Activated CD4-positive, alpha-beta T cell treated with anti-CD3 and anti-CD28 coated beads for 36 hours (primary cell): ENCODE measurements at regions of chr18 and their contacts with region 1.

Region 1: GRCh38 chr18:6382963-6383362 is 31.7 kb downstream of the L3MBTL4 start:
- DNase-seq: no peak
- ATAC-seq: no peak
- H3K4me3 Mint-ChIP-seq: no peak overlapping the region
- H3K27ac Mint-ChIP-seq: no peak overlapping the region
- H3K4me1 Mint-ChIP-seq: no peaks in the 10 kb centered on the region
- H3K27me3 Mint-ChIP-seq: peaks cover 4% of the 10 kb centered on the region

Region 2: GRCh38 chr18:6333981-6334380 is 49.0 kb before region 1 on chr18:
- CTCF ChIA-PET with region 1: no interaction called
- POLR2A ChIA-PET with region 1: no interaction called
- intact Hi-C with region 1: loop called in 1 of 2 experiments (anchors 5 kb)
- DNase-seq: no peak
- ATAC-seq: no peak
- H3K4me3 Mint-ChIP-seq: no peak overlapping the region
- H3K27ac Mint-ChIP-seq: no peak overlapping the region
- H3K4me1 Mint-ChIP-seq: no peaks in the 10 kb centered on the region
- H3K27me3 Mint-ChIP-seq: no peaks in the 10 kb centered on the region

Region 3: DNA sequence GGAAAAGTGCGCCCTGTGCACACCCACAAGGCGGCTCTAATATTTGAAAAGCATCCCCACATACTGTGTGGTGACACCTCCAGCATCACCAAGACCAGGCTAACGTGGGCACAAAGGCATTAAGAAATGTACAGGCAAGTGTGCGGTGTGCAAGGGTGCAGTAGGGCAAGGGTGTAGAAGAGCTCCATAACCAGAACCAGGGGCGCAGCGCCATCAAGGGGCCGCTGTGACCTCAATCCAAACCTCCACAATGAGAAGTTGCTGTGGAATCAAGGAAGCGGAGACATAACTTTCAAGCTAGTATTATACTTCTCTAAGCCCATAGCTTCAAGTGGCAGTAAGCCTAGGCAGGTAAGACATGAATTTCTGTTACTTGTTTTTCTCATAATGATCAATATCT is 18.7 kb after region 1 on chr18:
- CTCF ChIA-PET with region 1: no interaction called
- POLR2A ChIA-PET with region 1: no interaction called
- intact Hi-C with region 1: no loop called
- DNase-seq: peak; percentile 12
- ATAC-seq: no peak
- H3K4me3 Mint-ChIP-seq: no peak overlapping the region
- H3K27ac Mint-ChIP-seq: no peak overlapping the region
- H3K4me1 Mint-ChIP-seq: no peaks in the 10 kb centered on the region
- H3K27me3 Mint-ChIP-seq: no peaks in the 10 kb centered on the region